A673 (cell line): ENCODE measurements at regions of chr11 and their contacts with region 1.

Region 1: GRCh38 chr11:85595285-85595884 is 31.8 kb downstream of the DLG2 start:
- DNase-seq: peak; percentile 72
- H3K4me3 ChIP-seq: no peak overlapping the region
- H3K27ac ChIP-seq: no peak overlapping the region
- H3K4me1 ChIP-seq: no peaks in the 10 kb centered on the region
- H3K27me3 ChIP-seq: no peaks in the 10 kb centered on the region
- CTCF ChIP-seq: peak; percentile 71

Region 2: DNA sequence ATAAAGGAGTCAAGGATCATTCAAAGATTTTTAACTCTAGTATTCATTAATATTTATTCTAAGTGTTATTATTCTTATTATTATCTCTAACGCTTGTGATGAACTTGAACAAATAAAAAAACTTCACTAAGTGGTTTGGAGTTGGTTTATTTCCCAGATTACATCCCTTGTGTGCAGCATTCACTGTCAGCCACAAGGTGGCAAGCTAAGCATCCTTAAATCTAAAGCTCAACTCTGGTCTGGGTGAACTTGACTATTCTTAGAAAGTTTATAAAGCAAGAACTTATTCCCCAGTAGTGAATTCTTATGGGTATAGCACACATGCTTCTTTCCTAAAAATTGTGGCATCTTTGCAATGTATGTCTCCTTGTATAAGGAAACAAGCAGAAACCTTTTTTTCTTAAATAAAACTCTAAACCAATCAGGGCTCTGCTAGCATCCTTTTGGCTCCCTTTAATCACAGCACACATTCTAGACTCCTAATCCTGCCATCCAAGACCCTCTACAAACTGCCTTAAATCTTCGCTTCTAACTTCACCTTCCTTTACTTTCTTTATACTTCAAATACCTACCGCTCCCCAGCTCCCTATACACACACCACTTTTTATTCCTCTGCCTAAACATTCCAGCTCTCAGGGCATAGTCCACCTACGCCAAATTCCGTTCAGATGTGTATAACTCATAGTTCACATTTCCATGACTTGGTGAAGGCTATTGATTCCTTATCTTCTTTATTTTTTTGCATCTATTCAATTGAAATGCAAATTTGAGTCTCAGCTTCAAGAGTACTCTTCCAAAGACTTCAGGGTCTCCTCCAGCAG is 1037.1 kb before region 1 on chr11:
- CTCF ChIA-PET with region 1: interaction called, 3 read pairs
- POLR2A ChIA-PET with region 1: no interaction called
- intact Hi-C with region 1: loop called (anchors 2 kb)
- DNase-seq: peak; percentile 68
- H3K4me3 ChIP-seq: no peak overlapping the region
- H3K27ac ChIP-seq: no peak overlapping the region
- H3K4me1 ChIP-seq: no peaks in the 10 kb centered on the region
- H3K27me3 ChIP-seq: no peaks in the 10 kb centered on the region
- CTCF ChIP-seq: peak; percentile 93

Region 3: GRCh38 chr11:84800755-84801346 is 794.5 kb before region 1 on chr11:
- CTCF ChIA-PET with region 1: no interaction called
- POLR2A ChIA-PET with region 1: no interaction called
- intact Hi-C with region 1: loop called (anchors 2 kb)
- DNase-seq: peak; percentile 26
- H3K4me3 ChIP-seq: no peak overlapping the region
- H3K27ac ChIP-seq: no peak overlapping the region
- H3K4me1 ChIP-seq: no peaks in the 10 kb centered on the region
- H3K27me3 ChIP-seq: no peaks in the 10 kb centered on the region
- CTCF ChIP-seq: peak; percentile 47; the same call in 1 of the 2 replicates

Region 4: DNA sequence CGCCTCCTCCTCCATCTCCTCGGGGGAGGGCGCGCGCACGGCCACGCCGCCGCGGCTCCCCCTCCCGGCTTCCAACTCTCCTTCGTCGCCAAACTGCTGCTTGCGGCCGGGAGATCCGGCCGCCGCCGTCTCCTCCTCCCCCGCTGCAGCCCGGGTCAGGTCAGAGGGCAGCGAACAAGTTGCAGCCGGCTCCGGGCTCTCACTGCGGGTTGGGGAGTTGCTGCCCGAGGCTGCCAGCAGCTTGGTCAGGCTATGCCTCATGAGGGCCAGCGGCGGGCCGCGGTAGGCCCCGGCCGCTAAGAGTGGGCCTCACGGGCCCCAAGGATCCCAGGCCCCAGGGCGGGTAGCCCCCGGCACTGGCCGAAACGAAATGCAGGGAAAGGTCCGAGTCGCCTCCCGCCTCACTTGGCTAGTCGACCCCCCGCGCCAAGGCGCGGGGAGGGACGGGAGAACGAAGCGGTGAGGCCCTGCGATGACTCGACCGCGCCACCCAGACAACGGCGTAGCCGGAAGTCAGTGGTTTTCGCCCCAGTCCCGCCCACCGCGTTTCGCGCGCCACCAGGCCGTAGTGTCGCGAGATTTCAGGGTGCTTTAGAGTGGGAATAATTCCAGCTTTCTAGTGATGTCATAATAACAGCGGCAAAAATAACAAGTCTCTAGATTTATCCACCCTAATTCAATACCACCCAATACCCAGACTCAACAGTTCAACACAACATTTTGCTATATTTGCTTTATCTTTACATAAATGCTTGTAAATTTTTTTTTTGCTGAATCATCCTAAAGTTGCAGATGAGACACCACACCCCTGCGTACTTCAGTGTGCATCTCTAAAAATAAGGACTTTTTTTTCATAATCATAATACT is 69.5 kb after region 1 on chr11 and contains the start of gene CREBZF:
- CTCF ChIA-PET with region 1: no interaction called
- POLR2A ChIA-PET with region 1: no interaction called
- intact Hi-C with region 1: loop called (anchors 5 kb)
- DNase-seq: peak; percentile 98
- H3K4me3 ChIP-seq: peak within 1 kb of the TSS; percentile 87
- H3K27ac ChIP-seq: peak within 1 kb of the TSS; percentile 97
- H3K4me1 ChIP-seq: peaks cover 24% of the 10 kb centered on the region
- H3K27me3 ChIP-seq: peaks cover 4% of the 10 kb centered on the region
- CTCF ChIP-seq: no peak
- total RNA-seq, gene CREBZF: 74.1 and 76.6 TPM in 2 replicates

Region 5: DNA sequence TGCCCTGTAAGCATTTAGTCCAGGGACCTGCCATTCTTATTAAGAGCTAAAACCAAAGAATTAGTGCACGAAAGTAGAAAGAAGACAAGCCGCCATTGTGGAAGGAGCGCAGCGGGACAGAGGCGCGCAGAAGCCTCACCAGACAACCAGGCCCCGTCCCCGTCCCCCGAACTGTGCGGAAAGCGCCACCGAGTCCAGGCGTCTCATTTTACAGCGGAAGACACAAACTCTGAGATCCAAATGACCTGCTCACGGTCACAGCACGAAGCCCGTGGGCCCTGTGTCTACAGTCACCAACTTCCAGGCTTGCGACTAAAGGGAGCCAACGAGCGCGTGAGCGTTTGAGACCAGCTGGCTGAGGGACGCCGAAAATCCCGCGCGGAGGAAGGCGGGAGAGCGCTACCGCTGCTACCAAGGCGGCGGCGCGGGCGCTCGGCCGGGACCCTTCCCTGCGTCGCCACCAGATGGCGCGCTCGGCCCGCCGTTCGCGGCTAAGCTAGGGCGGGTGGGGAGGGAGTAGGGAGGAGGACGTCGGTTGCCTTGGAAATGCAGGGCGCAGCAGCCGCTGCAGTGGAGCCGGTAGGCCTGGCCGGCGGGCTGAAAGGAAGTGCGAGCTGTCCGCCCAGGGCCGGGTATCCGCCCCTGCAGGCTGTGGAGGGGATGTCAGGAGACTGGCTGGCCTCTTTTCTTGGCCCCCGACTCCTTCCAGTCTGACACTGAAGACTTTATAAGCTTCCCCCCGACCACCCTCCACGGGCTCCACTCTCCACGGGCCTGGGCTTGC is 259.4 kb after region 1 on chr11:
- CTCF ChIA-PET with region 1: no interaction called
- POLR2A ChIA-PET with region 1: no interaction called
- intact Hi-C with region 1: loop called (anchors 2 kb)
- DNase-seq: peak; percentile 95
- H3K4me3 ChIP-seq: peak overlapping the region; percentile 41
- H3K27ac ChIP-seq: peak overlapping the region; percentile 70
- H3K4me1 ChIP-seq: peaks cover 13% of the 10 kb centered on the region
- H3K27me3 ChIP-seq: no peaks in the 10 kb centered on the region
- CTCF ChIP-seq: peak; percentile 94